SK-N-SH (cell line): ENCODE measurements at regions of chr6 and their contacts with region 1.

Region 1: GRCh38 chr6:110039364-110039980 is 61.4 kb downstream of the GPR6 start:
- DNase-seq: peak; percentile 77
- H3K4me3 ChIP-seq: peak overlapping the region in 1 of 2 experiments; percentile 54; a peak in 1 of 4 replicates
- H3K27ac ChIP-seq: no peak overlapping the region
- H3K4me1 ChIP-seq: peaks cover 0 to 2% of the 10 kb centered on the region in 2 experiments; a peak in 1 of 4 replicates
- H3K27me3 ChIP-seq: no peaks in the 10 kb centered on the region
- CTCF ChIP-seq: peak; percentile 98
- EP300 ChIP-seq: no peak
- RAD21 ChIP-seq: peak; percentile 98

Region 2: DNA sequence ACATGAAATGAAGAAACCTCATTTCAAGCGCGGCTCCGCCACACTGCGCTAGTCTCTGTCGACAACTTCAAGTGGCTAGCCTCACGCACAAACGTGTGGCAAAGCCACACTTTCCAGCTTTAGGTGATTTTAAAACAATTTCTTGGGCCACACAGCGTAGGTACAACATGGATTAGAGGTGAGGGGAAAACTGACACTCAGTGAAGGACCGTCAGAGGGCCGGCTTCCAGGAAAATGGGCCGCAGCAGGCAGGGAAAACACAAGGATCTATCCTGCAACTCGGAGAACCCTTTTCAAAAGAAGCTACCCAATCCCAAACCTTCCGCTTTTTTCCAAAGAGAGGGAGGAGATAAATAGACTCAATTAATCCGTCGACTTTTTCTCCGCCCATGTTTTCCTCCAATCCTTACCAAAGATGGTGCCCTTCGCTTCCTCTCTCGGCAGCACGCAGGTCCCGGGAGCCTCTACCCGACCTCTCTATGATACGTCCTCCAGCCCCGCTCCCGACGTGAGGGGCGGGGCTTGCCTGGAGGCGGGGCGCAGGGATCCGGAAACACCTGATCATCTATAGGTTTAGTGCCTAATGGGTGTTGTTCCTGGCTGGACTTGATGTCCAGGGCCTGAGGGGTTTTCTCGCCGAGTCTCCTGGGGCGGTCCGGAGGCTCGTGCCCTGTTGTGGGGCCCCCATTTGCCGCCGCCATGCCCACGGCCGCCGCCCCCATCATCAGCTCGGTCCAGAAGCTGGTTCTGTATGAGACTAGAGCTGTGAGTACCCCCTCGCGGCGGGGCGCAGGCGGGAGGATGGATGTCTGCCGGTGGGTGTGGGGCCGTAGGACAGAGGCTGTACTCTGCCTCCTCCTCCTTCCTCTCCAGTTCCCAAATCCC is 348.5 kb before region 1 on chr6 and contains the starts of genes AK9 and FIG4:
- CTCF ChIA-PET with region 1: interaction called, 35 read pairs
- POLR2A ChIA-PET with region 1: no interaction called
- DNase-seq: peak; percentile 96
- H3K4me3 ChIP-seq: peak within 1 kb of the TSS; percentile 88 to 96
- H3K27ac ChIP-seq: peak within 1 kb of the TSS; percentile 51 to 87
- H3K4me1 ChIP-seq: peaks cover 0 to 3% of the 10 kb centered on the region in 2 experiments; a peak in 3 of 4 replicates
- H3K27me3 ChIP-seq: no peaks in the 10 kb centered on the region
- CTCF ChIP-seq: peak; percentile 42
- EP300 ChIP-seq: no peak
- RAD21 ChIP-seq: 0 out of 2 replicates have a peak, but pooled peaks have one; percentile 14
- polyA plus RNA-seq, gene AK9: 0.76 and 1.1 TPM in 2 replicates
- polyA plus RNA-seq, gene FIG4: 6.8 and 8.4 TPM in 2 replicates

Region 3: DNA sequence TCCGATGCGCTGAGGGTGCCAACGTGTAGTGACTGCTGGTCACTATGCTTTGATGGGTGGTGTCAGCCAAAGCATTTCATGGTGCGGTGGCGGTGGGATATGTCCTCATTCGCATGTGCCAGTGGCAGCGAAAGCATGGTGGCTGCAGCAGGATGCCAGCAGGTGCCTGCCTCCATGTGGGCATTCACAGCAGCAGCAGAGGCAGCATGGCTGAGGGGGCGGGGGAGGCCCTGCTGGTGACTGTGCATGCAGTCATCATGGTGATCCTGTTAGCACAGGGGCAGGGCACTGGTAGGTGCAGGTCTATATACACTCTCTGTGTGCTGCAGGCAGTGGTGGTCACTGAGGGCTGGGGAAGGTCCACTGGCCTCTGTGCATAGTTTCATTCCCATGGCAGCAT is 326.4 kb before region 1 on chr6:
- CTCF ChIA-PET with region 1: interaction called, 57 read pairs
- POLR2A ChIA-PET with region 1: no interaction called
- DNase-seq: no peak
- H3K4me3 ChIP-seq: no peak overlapping the region
- H3K27ac ChIP-seq: no peak overlapping the region
- H3K4me1 ChIP-seq: peaks cover 0 to 22% of the 10 kb centered on the region in 2 experiments; a peak in 2 of 4 replicates
- H3K27me3 ChIP-seq: no peaks in the 10 kb centered on the region
- CTCF ChIP-seq: no peak
- EP300 ChIP-seq: no peak
- RAD21 ChIP-seq: no peak

Region 4: GRCh38 chr6:109978174-109979032 is 61.1 kb before region 1 on chr6 and contains the start of gene GPR6:
- CTCF ChIA-PET with region 1: interaction called, 10 read pairs
- POLR2A ChIA-PET with region 1: no interaction called
- DNase-seq: peak; percentile 76
- H3K4me3 ChIP-seq: peak within 1 kb of the TSS in 1 of 2 experiments; percentile 36; a peak in 1 of 4 replicates
- H3K27ac ChIP-seq: no peak within 1 kb of the TSS
- H3K4me1 ChIP-seq: peaks cover 0 to 15% of the 10 kb centered on the region in 2 experiments; a peak in 1 of 4 replicates
- H3K27me3 ChIP-seq: peaks cover 18% of the 10 kb centered on the region; the same call in 1 of the 2 replicates
- CTCF ChIP-seq: no peak
- EP300 ChIP-seq: no peak
- RAD21 ChIP-seq: no peak
- polyA plus RNA-seq, gene GPR6: not detected in 2 replicates

Region 5: DNA sequence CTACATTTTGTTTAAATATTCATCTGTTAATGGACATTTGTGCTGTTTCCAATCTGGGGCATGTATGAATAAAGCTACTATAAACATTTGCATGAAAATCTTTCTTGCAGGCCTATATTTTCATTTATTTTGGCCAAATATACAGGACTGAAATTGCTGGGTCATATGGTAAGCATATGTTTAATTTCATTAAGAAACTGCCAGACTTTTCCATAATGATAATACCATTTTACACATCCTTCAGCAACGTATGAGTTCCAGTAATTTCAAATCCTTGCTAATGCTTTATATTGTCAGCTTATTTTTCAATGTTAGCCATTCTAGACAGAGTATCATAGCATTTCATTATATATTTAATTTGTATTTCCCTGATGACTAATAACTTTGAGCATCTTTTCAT is 10.3 kb before region 1 on chr6:
- CTCF ChIA-PET with region 1: interaction called, 43 read pairs
- POLR2A ChIA-PET with region 1: no interaction called
- DNase-seq: no peak
- H3K4me3 ChIP-seq: no peak overlapping the region
- H3K27ac ChIP-seq: no peak overlapping the region
- H3K4me1 ChIP-seq: no peaks in the 10 kb centered on the region; a peak in 1 of 4 replicates
- H3K27me3 ChIP-seq: no peaks in the 10 kb centered on the region
- CTCF ChIP-seq: no peak
- EP300 ChIP-seq: no peak
- RAD21 ChIP-seq: no peak

Region 6: GRCh38 chr6:110063594-110064263 is 24.3 kb after region 1 on chr6:
- CTCF ChIA-PET with region 1: interaction called, 10 read pairs
- POLR2A ChIA-PET with region 1: no interaction called
- DNase-seq: no peak
- H3K4me3 ChIP-seq: no peak overlapping the region
- H3K27ac ChIP-seq: no peak overlapping the region
- H3K4me1 ChIP-seq: peaks cover 0 to 2% of the 10 kb centered on the region in 2 experiments; a peak in 1 of 4 replicates
- H3K27me3 ChIP-seq: no peaks in the 10 kb centered on the region; the same call in 1 of the 2 replicates
- CTCF ChIP-seq: no peak
- EP300 ChIP-seq: no peak
- RAD21 ChIP-seq: no peak

Region 7: GRCh38 chr6:110398778-110399177 is 359.3 kb after region 1 on chr6:
- CTCF ChIA-PET with region 1: interaction called, 97 read pairs
- POLR2A ChIA-PET with region 1: no interaction called
- DNase-seq: no peak
- H3K4me3 ChIP-seq: no peak overlapping the region
- H3K27ac ChIP-seq: no peak overlapping the region
- H3K4me1 ChIP-seq: no peaks in the 10 kb centered on the region
- H3K27me3 ChIP-seq: no peaks in the 10 kb centered on the region
- CTCF ChIP-seq: no peak
- EP300 ChIP-seq: no peak
- RAD21 ChIP-seq: no peak